Caco-2 (cell line): ENCODE measurements at regions of chr3 and their contacts with region 1.

Region 1: GRCh38 chr3:143895805-143896204 is 47.5 kb upstream of the SLC9A9 start:
- DNase-seq: no peak
- H3K4me3 ChIP-seq: no peak overlapping the region
- H3K4me3 Mint-ChIP-seq: no peak overlapping the region
- H3K27ac Mint-ChIP-seq: no peak overlapping the region
- H3K4me1 ChIP-seq: peaks cover 25% of the 10 kb centered on the region
- H3K4me1 Mint-ChIP-seq: peaks cover 20% of the 10 kb centered on the region
- H3K27me3 ChIP-seq: no peaks in the 10 kb centered on the region
- H3K27me3 Mint-ChIP-seq: no peaks in the 10 kb centered on the region
- CTCF ChIP-seq: peak in 1 of 2 experiments; percentile 22

Region 2: DNA sequence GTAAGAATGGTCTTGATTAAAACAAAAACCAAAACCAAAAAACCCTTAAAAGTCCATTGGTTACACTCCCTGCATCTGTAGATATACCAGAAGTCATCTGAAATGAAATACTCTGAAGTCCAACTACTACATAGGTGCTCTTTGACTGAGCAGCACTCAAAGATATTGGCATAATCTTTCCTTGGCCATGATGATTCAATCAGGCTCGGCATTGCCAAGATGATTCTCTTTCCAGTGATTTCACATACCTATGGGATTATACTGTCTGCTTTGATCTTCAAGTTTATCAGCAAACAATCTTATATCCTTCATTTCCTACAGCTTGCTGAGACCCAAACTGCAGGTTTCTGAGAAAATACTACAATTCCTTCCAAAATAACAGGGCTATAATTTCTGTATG is 39.9 kb after region 1 on chr3:
- CTCF ChIA-PET with region 1: no interaction called
- POLR2A ChIA-PET with region 1: no interaction called
- intact Hi-C with region 1: loop called (anchors 1 kb)
- DNase-seq: no peak
- H3K4me3 ChIP-seq: no peak overlapping the region
- H3K4me3 Mint-ChIP-seq: no peak overlapping the region
- H3K27ac Mint-ChIP-seq: no peak overlapping the region
- H3K4me1 ChIP-seq: no peaks in the 10 kb centered on the region
- H3K4me1 Mint-ChIP-seq: no peaks in the 10 kb centered on the region
- H3K27me3 ChIP-seq: no peaks in the 10 kb centered on the region
- H3K27me3 Mint-ChIP-seq: no peaks in the 10 kb centered on the region
- CTCF ChIP-seq: no peak

Region 3: GRCh38 chr3:143951351-143951971 is 55.7 kb after region 1 on chr3:
- CTCF ChIA-PET with region 1: no interaction called
- POLR2A ChIA-PET with region 1: no interaction called
- intact Hi-C with region 1: loop called (anchors 1 kb)
- DNase-seq: peak; percentile 36 to 47
- H3K4me3 ChIP-seq: no peak overlapping the region
- H3K4me3 Mint-ChIP-seq: no peak overlapping the region
- H3K27ac Mint-ChIP-seq: no peak overlapping the region
- H3K4me1 ChIP-seq: no peaks in the 10 kb centered on the region
- H3K4me1 Mint-ChIP-seq: peaks cover 6% of the 10 kb centered on the region
- H3K27me3 ChIP-seq: no peaks in the 10 kb centered on the region
- H3K27me3 Mint-ChIP-seq: no peaks in the 10 kb centered on the region
- CTCF ChIP-seq: peak; percentile 70 to 76

Region 4: DNA sequence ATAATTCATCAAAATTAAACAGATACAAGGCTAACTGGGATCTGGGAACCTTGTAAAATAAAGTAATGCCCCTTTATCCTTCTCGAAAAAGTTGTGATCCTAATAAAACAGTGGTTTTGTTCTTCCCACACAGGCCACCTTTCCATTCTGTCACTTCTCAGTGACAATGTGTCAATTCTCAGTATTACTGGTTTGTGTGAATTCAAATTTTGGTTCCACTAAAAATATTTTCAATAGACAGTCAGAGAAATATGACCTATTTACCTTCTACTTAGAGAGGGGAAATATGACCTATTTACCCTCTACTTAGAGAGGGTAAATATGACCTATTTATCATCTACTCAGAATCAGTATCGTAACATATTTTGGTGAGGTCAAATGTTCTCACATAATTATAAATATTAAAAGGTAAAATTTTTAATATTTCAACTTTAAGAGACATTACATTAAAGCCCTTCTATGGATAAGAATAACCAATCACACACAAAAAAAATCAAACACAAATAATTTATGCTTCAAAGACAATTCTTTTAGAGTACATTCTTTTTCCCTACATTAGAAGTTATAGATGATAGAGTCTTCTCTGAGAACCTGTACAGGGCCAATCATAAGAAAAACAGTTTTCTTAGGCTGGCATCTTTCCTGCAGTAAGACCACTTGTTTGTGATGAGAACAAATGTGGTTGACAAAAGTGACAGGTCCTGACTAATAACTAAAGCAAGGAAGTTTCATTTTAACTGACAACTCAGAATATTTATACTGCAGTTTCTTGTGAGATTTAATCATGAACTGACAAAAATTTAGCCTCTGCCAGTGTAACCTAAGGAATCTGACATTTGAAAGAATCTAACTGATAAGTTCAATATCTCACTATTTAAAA is 399.1 kb after region 1 on chr3:
- CTCF ChIA-PET with region 1: no interaction called
- POLR2A ChIA-PET with region 1: no interaction called
- intact Hi-C with region 1: loop called (anchors 5 kb)
- DNase-seq: no peak
- H3K4me3 ChIP-seq: no peak overlapping the region
- H3K4me3 Mint-ChIP-seq: peak overlapping the region; percentile 50
- H3K27ac Mint-ChIP-seq: peak overlapping the region; percentile 68
- H3K4me1 ChIP-seq: peaks cover 38% of the 10 kb centered on the region
- H3K4me1 Mint-ChIP-seq: peaks cover 21% of the 10 kb centered on the region
- H3K27me3 ChIP-seq: no peaks in the 10 kb centered on the region
- H3K27me3 Mint-ChIP-seq: no peaks in the 10 kb centered on the region
- CTCF ChIP-seq: no peak

Region 5: DNA sequence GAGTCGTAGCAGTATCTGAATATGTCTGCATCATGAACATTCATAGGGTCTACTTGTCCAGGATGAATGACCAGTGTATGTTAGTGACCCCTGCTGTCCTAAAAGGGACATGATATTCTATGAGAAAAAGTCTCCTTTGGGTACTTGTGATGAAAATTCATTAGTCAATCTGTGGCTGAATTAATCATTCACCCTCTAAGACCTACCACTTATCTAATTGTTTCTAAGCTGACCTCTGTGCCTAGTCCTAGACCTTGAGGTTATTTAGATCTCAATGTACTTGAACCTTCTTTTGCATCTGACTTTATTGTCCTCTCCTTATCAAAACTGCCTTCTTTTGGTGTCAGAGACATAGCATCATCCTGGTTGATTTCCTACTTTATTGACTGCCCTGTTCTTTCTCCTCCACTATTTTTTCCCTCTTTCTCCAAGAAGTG is 875.1 kb after region 1 on chr3:
- CTCF ChIA-PET with region 1: no interaction called
- POLR2A ChIA-PET with region 1: no interaction called
- intact Hi-C with region 1: loop called (anchors 2 kb)
- DNase-seq: peak in 1 of 2 experiments; percentile 41
- H3K4me3 ChIP-seq: no peak overlapping the region
- H3K4me3 Mint-ChIP-seq: no peak overlapping the region
- H3K27ac Mint-ChIP-seq: no peak overlapping the region
- H3K4me1 ChIP-seq: no peaks in the 10 kb centered on the region
- H3K4me1 Mint-ChIP-seq: no peaks in the 10 kb centered on the region
- H3K27me3 ChIP-seq: no peaks in the 10 kb centered on the region
- H3K27me3 Mint-ChIP-seq: peaks cover 4% of the 10 kb centered on the region
- CTCF ChIP-seq: peak; percentile 55 to 61

Region 6: GRCh38 chr3:144843099-144843498 is 947.3 kb after region 1 on chr3:
- CTCF ChIA-PET with region 1: no interaction called
- POLR2A ChIA-PET with region 1: no interaction called
- intact Hi-C with region 1: loop called (anchors 10 kb)
- DNase-seq: peak in 1 of 2 experiments; percentile 8
- H3K4me3 ChIP-seq: no peak overlapping the region
- H3K4me3 Mint-ChIP-seq: no peak overlapping the region
- H3K27ac Mint-ChIP-seq: no peak overlapping the region
- H3K4me1 ChIP-seq: no peaks in the 10 kb centered on the region
- H3K4me1 Mint-ChIP-seq: no peaks in the 10 kb centered on the region
- H3K27me3 ChIP-seq: no peaks in the 10 kb centered on the region
- H3K27me3 Mint-ChIP-seq: no peaks in the 10 kb centered on the region
- CTCF ChIP-seq: no peak